Naive thymus-derived CD4-positive, alpha-beta T cell (primary cell): ENCODE measurements at regions of chr4 and their contacts with region 1.

Region 1: DNA sequence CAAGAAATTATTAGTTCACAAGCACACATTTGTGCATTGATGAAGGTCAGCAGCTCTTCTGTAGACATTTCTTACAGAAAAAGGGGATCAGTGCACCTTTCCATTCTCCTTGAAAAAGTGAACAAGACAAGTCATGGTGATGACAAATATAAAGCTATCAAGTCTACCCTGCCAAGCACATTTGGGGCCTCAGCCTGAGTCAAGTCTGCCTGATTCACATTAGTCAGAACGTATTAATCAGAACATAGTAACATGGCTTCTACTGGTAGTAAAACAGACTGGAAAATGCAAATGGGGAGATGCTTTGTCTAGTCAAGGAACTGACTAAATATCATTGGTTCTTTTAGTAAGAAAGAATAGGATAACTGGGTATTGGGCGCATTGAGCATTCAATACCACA is 2305.1 kb downstream of the PCDH7 start:
- DNase-seq: no peak
- ATAC-seq: no peak
- H3K4me3 ChIP-seq: no peak overlapping the region
- H3K4me3 Mint-ChIP-seq: no peak overlapping the region
- H3K27ac ChIP-seq: no peak overlapping the region
- H3K27ac Mint-ChIP-seq: no peak overlapping the region
- H3K4me1 ChIP-seq: no peaks in the 10 kb centered on the region
- H3K4me1 Mint-ChIP-seq: no peaks in the 10 kb centered on the region
- H3K27me3 ChIP-seq: no peaks in the 10 kb centered on the region
- H3K27me3 Mint-ChIP-seq: no peaks in the 10 kb centered on the region

Region 2: DNA sequence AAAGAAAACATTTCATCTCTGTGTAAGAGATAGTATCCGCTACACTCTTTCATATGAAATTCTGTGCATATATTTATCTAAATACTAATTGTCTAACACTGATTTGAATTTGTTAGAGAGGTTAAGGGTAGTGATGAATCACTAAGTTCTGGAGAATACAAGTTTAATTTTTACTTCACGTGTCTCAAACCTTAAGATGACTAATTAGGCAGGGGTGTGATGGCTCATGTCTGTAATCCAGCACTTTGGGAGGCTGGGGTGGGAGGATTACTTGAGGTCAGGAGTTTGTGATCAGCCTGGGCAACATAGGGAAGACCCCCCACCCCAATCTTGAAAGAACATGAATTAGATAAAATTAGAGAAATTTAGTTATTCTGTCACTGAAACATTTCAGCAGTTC is 63.1 kb before region 1 on chr4:
- CTCF ChIA-PET with region 1: no interaction called
- POLR2A ChIA-PET with region 1: no interaction called
- intact Hi-C with region 1: loop called in 1 of 2 experiments (anchors 10 kb)
- DNase-seq: no peak
- ATAC-seq: no peak
- H3K4me3 ChIP-seq: no peak overlapping the region
- H3K4me3 Mint-ChIP-seq: no peak overlapping the region
- H3K27ac ChIP-seq: no peak overlapping the region
- H3K27ac Mint-ChIP-seq: no peak overlapping the region
- H3K4me1 ChIP-seq: no peaks in the 10 kb centered on the region
- H3K4me1 Mint-ChIP-seq: no peaks in the 10 kb centered on the region
- H3K27me3 ChIP-seq: no peaks in the 10 kb centered on the region
- H3K27me3 Mint-ChIP-seq: no peaks in the 10 kb centered on the region